ENCODE measurements at regions of chr7 and their contacts with region 1.

Region 1: DNA sequence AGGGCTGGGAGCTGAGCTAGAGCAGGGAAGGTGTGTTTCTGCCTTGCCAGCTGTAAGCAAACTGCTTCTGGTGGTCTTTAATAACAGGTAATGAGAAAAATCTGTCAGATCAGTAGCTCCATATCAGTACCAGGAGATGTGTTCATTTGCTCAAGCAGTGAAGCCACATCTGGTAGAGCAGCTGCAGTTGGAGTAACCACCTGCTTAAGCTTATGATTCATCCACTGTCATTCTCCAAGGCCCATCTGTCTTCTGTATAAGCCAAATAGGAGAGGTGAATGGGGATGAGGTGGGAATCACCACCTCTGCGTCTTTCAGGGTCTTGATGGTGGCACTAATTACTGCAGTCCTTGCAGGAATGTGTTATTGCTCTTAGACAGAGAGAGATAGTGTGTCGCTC is 18.4 kb upstream of the COBL start:
- DNase-seq: no peak
- H3K4me3 ChIP-seq: no peak overlapping the region
- CTCF ChIP-seq: no peak

Region 2: GRCh38 chr7:51289623-51290303 is 45.3 kb before region 1 on chr7:
- in situ Hi-C with region 1: loop called (anchors 5 kb)
- DNase-seq: no peak
- H3K4me3 ChIP-seq: no peak overlapping the region
- CTCF ChIP-seq: no peak